CD4-positive, alpha-beta memory T cell (primary cell): ENCODE measurements at regions of chrX and their contacts with region 1.

Region 1: DNA sequence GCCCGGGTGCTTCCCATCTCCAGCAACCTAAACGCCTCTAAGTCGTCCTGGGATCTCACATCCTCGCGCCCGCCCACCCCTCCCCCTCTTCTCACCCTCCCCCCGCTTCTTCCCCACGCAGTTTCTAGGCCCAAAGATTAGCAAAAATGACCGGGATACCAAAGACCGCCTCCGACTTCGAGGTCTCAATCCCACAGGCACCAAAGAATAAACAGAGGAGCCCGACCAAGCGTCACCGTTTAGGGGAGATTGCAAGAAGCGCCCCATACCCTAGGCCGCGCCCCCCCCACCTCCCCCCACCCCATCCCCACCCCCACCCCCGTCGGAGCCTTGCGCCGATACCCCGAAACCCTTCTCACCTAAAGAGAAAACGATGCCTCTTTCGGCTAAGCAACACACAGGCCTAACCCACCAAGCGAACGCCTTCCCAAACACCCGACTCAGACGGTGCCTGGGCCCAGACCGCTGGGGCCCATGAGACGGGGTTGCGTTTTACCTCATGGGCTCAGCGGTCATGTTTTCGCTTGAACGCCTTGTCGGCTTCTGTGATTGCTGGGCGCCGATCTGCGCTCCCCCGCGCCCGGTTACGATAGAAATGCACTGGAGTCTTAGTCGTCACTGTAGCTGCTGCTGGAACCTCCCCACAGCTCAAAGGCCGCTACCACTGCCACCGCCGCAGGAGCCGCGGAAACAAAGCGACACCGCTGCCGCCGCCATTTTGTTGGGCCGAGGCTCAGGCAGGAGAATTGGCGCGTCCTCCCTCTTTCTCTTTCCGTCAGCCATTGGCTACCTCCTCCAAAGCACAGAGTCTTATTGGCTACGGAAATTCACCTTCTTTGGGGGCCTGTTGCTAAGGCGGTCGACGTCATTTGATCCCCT is at the start of gene ATRX:
- DNase-seq: peak; percentile 80 to 87 (median 82)
- H3K4me3 ChIP-seq: peak within 1 kb of the TSS; percentile 54 to 57
- H3K4me3 Mint-ChIP-seq: peak within 1 kb of the TSS; percentile 98 to 100 (median 99)
- H3K27ac ChIP-seq: peak within 1 kb of the TSS; percentile 90
- H3K27ac Mint-ChIP-seq: peak within 1 kb of the TSS; percentile 99 to 100 (median 100)
- H3K4me1 ChIP-seq: peaks cover 45% of the 10 kb centered on the region
- H3K4me1 Mint-ChIP-seq: peaks cover 10 to 55% (median 26%) of the 10 kb centered on the region in 4 donors
- H3K27me3 ChIP-seq: no peaks in the 10 kb centered on the region
- H3K27me3 Mint-ChIP-seq: no peaks in the 10 kb centered on the region
- total RNA-seq, gene ATRX: 106 to 111 TPM

Region 2: DNA sequence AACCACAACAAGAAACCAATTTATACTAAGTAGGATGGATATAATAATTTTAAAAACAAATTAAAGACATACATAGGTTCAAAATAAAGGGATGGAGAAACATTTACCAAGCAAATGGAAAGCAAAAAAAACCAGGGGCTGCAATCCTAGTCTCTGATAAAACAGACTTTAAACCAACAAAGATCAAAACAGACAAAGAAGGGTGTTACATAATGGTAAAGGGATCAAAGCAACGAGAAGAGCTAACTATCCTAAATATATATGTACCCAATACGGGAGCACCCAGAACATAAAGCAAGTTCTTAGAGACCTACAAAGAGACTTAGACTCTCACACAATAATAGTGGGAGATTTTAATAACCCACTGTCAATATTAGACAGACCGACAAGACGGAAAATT is 66.3 kb before region 1 on chrX:
- CTCF ChIA-PET with region 1: no interaction called
- POLR2A ChIA-PET with region 1: interaction called, 3 read pairs
- intact Hi-C with region 1: loop called (anchors 10 kb)
- DNase-seq: no peak
- H3K4me3 ChIP-seq: no peak overlapping the region
- H3K4me3 Mint-ChIP-seq: peak overlapping the region in 3 of 8 donors; percentile 49 to 71 (median 51)
- H3K27ac ChIP-seq: no peak overlapping the region
- H3K27ac Mint-ChIP-seq: peak overlapping the region in 3 of 7 donors; percentile 26 to 82 (median 68)
- H3K4me1 ChIP-seq: peaks cover 13% of the 10 kb centered on the region
- H3K4me1 Mint-ChIP-seq: peaks cover 16 to 50% (median 27%) of the 10 kb centered on the region in 4 donors
- H3K27me3 ChIP-seq: no peaks in the 10 kb centered on the region
- H3K27me3 Mint-ChIP-seq: no peaks in the 10 kb centered on the region

Region 3: GRCh38 chrX:77899081-77899828 is 113.5 kb after region 1 on chrX and contains the start of gene COX7B:
- CTCF ChIA-PET with region 1: interaction called, 3 read pairs
- POLR2A ChIA-PET with region 1: interaction called, 7 read pairs
- intact Hi-C with region 1: loop called (anchors 1 kb)
- DNase-seq: peak; percentile 82 to 91 (median 88)
- H3K4me3 ChIP-seq: peak within 1 kb of the TSS; percentile 42 to 76
- H3K4me3 Mint-ChIP-seq: peak within 1 kb of the TSS; percentile 84 to 96 (median 91)
- H3K27ac ChIP-seq: peak within 1 kb of the TSS; percentile 81
- H3K27ac Mint-ChIP-seq: peak within 1 kb of the TSS; percentile 88 to 99 (median 95)
- H3K4me1 ChIP-seq: peaks cover 25% of the 10 kb centered on the region
- H3K4me1 Mint-ChIP-seq: peaks cover 7 to 49% (median 20%) of the 10 kb centered on the region in 4 donors
- H3K27me3 ChIP-seq: no peaks in the 10 kb centered on the region
- H3K27me3 Mint-ChIP-seq: no peaks in the 10 kb centered on the region
- total RNA-seq, gene COX7B: 115 to 126 TPM